Right cardiac atrium (tissue), 5 donors: ENCODE measurements at regions of chr1 and their contacts with region 1.

Region 1: DNA sequence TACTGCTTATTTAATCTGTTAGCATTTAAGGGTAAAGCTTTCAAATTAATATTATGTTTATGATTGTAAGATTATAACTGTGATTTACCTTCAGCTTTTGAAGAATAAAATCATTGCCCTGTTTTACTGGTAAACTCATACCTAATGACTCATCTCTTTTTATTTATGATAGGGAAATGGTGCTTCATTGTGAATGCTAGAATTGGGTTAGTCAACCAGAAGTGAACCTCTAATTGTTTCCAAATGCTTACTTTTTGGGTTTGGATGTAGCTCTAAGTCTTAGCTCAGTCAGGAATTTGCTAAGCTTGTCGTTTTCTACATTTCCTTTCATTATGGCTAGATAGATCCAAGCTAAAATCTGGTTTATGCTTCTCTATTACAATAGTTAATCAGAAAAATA is 59.4 kb downstream of the SLC30A7 start:
- DNase-seq: no peak
- ATAC-seq: no peak
- H3K4me3 ChIP-seq: no peak overlapping the region
- H3K27ac ChIP-seq: no peak overlapping the region
- H3K4me1 ChIP-seq: no peaks in the 10 kb centered on the region
- H3K27me3 ChIP-seq: no peaks in the 10 kb centered on the region

Region 2: GRCh38 chr1:100023482-100023881 is 931.8 kb before region 1 on chr1:
- intact Hi-C with region 1: no loop called
- DNase-seq: peak in 1 of 3 donors; percentile 26
- ATAC-seq: no peak
- H3K4me3 ChIP-seq: no peak overlapping the region
- H3K27ac ChIP-seq: no peak overlapping the region
- H3K4me1 ChIP-seq: no peaks in the 10 kb centered on the region
- H3K27me3 ChIP-seq: no peaks in the 10 kb centered on the region

Region 3: DNA sequence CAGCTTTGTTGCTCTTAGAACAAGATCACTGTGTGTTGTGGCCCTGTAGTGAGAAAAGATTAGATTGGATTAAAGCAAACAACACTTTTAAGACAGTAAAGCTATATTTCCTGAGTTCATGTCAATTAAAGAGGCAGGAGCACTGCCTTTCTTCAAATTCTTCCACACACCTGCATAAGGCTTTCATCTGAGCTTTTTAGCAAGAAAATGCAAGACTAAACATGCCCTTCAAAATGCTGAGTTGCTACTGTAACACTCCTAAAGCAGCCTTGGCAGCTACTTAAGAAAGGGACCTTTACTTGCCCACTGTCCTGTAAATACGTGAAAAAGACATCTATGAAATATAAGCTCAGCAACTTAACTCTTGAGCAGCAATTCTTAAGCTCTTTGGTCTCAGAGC is 58.5 kb after region 1 on chr1:
- intact Hi-C with region 1: loop called in 1 of 4 experiments (anchors 10 kb)
- DNase-seq: no peak
- ATAC-seq: no peak
- H3K4me3 ChIP-seq: no peak overlapping the region
- H3K27ac ChIP-seq: no peak overlapping the region
- H3K4me1 ChIP-seq: no peaks in the 10 kb centered on the region
- H3K27me3 ChIP-seq: no peaks in the 10 kb centered on the region